ENCODE measurements at regions of chr3 and their contacts with region 1.

Region 1: DNA sequence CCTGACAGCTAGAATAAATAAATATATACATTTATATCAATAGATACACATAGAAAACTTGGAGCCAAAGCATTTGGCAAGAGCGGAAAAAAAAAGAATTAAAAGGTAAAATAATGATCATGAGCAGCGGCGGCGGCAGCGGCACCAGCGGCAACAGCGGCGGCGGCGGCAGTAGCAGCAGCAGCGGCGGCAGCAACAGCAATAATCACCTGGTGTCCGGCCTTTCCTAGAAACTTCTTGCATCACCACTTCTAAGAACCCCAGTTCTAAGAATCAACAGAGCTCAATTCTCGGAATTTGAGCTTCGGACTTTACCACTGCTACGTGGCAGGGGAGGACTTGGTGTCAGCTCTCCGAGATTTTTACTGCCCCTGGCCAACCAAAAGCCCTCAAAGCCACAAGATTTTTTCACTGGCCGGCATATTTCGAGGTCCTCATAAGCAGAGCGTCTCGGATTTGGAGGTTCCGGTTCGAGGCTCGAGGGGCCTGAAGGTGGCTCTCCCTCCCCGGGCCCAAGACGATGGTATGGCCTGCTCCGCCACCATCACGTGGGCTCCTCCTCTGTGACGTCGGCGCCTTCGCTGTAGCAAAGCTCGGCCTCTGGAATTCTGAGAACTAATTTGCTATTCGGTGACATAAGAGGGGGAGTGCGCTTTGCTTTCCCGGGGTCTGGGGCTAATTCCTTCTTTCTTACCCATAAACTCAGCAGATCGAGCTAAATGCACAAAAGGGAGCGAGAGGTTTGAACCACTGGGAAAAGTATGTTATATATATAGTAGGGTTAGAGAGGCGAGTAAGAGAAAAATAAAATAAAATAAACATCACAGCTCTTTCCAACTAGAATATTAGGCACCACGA is at the start of gene BCL6:
- DNase-seq: peak; percentile 93 to 94
- ATAC-seq: peak; percentile 48 to 51
- H3K4me3 ChIP-seq: peak within 1 kb of the TSS; percentile 70 to 94 (median 88)
- H3K27ac ChIP-seq: peak within 1 kb of the TSS; percentile 95 to 100 (median 98)
- H3K4me1 ChIP-seq: peaks cover 22% of the 10 kb centered on the region in 2 donors
- H3K27me3 ChIP-seq: no peaks in the 10 kb centered on the region
- CTCF ChIP-seq: peak in 3 of 5 experiments; percentile 16 to 35 (median 23)
- POLR2A ChIP-seq: peak; percentile 95 to 99
- total RNA-seq, gene BCL6: 223 to 363 (median 292) TPM

Region 2: DNA sequence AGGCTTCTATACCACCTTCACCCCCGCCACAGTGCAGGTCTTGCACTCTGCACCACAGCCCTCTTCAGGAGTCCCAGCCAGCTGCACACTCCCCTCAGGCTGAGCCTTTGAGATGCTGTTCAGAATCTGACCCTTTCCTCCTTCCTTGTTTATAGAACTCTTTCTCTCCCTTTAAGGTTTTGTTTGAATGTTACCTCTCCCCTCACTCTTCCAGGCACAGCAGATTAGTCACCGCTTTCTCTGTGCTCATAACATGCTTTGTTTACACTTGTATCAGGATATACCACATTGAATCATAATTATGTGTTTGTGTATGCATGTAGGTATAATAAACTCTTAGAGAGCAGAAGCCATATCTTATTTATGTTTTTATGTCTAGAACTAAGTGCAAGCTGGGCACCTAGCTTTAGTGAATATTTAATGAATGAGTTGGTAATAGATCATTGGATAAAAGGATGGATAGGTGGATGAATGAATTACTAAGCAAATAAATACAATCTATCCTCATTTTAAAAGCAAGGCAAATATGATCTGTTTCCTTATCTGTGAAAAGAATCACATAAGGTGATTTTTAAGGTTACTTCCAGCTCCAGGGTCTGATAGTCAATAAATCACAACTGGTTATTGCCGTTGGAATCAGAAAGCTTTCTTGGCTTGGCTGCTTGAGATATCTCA is 168.3 kb after region 1 on chr3:
- in situ Hi-C with region 1: loop called in 1 of 4 experiments (anchors 5 kb)
- intact Hi-C with region 1: loop called (anchors 2 kb)
- DNase-seq: no peak
- ATAC-seq: no peak
- H3K4me3 ChIP-seq: no peak overlapping the region
- H3K27ac ChIP-seq: peak overlapping the region; percentile 78 to 94 (median 80)
- H3K4me1 ChIP-seq: peaks cover 59 to 62% of the 10 kb centered on the region in 2 donors
- H3K27me3 ChIP-seq: no peaks in the 10 kb centered on the region
- CTCF ChIP-seq: no peak
- POLR2A ChIP-seq: no peak

Region 3: GRCh38 chr3:188006726-188007393 is 261.4 kb after region 1 on chr3:
- in situ Hi-C with region 1: loop called in 1 of 4 experiments (anchors 10 kb)
- intact Hi-C with region 1: loop called (anchors 2 kb)
- DNase-seq: peak; percentile 87 to 97
- ATAC-seq: peak; percentile 86 to 90
- H3K4me3 ChIP-seq: peak overlapping the region; percentile 12 to 42 (median 26)
- H3K27ac ChIP-seq: peak overlapping the region; percentile 88 to 97 (median 90)
- H3K4me1 ChIP-seq: peaks cover 9 to 18% of the 10 kb centered on the region in 2 donors
- H3K27me3 ChIP-seq: no peaks in the 10 kb centered on the region
- CTCF ChIP-seq: peak in 2 of 5 experiments; percentile 4 to 23
- POLR2A ChIP-seq: peak; percentile 36 to 72

Region 4: GRCh38 chr3:188205992-188206416 is 460.6 kb after region 1 on chr3:
- in situ Hi-C with region 1: loop called in 1 of 4 experiments (anchors 25 kb)
- intact Hi-C with region 1: no loop called
- DNase-seq: no peak
- ATAC-seq: peak in 1 of 2 donors; percentile 50
- H3K4me3 ChIP-seq: no peak overlapping the region
- H3K27ac ChIP-seq: peak overlapping the region; percentile 23 to 72 (median 52)
- H3K4me1 ChIP-seq: peaks cover 25 to 31% of the 10 kb centered on the region in 2 donors
- H3K27me3 ChIP-seq: no peaks in the 10 kb centered on the region
- CTCF ChIP-seq: peak in 3 of 5 experiments; percentile 27 to 37 (median 37)
- POLR2A ChIP-seq: no peak

Region 5: DNA sequence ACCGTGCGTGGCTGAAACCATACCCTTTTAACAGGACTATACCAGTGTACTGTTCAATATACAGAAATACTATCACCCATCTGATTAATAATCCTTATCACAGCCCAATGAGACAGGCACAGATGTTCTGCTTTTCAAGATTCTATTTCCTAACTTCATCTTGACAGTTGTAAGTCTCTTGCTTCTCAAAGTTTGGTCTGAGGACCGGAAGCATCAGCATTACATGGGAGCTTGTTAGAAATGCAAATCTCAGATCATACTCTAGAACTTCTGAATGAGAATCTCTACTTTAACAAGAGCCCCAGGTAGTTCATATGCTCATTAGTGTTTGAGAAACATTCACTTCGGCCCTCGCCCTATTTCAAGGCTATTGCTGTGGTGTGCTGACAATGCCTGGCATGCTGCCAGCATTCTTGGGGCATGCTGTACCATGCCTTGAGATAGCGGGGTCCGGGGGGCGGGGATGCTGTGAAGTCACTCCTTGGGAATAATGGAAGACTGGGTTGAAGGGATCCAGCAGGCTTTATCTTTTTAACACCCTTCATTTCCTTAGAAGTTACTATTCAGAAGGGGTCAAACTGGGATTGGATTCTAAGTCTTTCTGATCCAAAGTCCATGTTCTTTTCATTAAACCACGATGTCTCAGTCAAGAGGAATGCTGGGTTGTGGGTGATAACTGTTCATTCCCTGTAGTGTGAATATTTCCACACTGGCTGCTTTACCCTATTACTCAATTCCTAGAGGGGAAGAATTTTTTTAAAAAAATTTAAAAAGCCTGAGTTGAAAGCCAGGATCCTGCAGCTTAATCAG is 603.2 kb after region 1 on chr3:
- in situ Hi-C with region 1: loop called in 1 of 4 experiments (anchors 10 kb)
- intact Hi-C with region 1: loop called (anchors 5 kb)
- DNase-seq: peak in 1 of 2 donors; percentile 61
- ATAC-seq: peak; percentile 31 to 36
- H3K4me3 ChIP-seq: no peak overlapping the region
- H3K27ac ChIP-seq: peak overlapping the region; percentile 80 to 91 (median 86)
- H3K4me1 ChIP-seq: peaks cover 42 to 80% of the 10 kb centered on the region in 2 donors
- H3K27me3 ChIP-seq: no peaks in the 10 kb centered on the region
- CTCF ChIP-seq: no peak
- POLR2A ChIP-seq: no peak

Region 6: DNA sequence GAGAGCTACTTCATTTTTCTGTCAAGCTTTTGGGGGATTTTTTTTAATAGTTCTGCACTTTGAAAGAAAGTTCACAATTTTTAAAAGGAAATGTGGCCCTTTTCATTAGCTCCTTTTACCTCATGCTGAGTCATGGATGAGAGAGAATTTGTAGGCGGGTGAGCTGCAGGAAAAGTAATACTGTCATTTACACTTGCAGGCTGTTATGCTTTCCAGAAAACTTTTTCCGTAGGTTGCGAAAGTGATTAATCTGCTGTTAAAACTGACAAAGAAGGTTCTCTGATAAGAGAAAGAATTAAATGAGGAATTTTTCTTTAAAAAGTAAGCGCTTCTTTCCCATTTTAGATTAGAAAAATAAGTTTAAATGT is 838.7 kb after region 1 on chr3:
- in situ Hi-C with region 1: loop called in 2 of 4 experiments (anchors 25 kb)
- intact Hi-C with region 1: loop called (anchors 10 kb)
- DNase-seq: peak in 1 of 2 donors; percentile 17
- ATAC-seq: peak; percentile 76 to 79
- H3K4me3 ChIP-seq: peak overlapping the region; percentile 17 to 44 (median 20)
- H3K27ac ChIP-seq: peak overlapping the region; percentile 67 to 77 (median 74)
- H3K4me1 ChIP-seq: peaks cover 39 to 42% of the 10 kb centered on the region in 2 donors
- H3K27me3 ChIP-seq: no peaks in the 10 kb centered on the region
- CTCF ChIP-seq: no peak
- POLR2A ChIP-seq: no peak

Region 7: DNA sequence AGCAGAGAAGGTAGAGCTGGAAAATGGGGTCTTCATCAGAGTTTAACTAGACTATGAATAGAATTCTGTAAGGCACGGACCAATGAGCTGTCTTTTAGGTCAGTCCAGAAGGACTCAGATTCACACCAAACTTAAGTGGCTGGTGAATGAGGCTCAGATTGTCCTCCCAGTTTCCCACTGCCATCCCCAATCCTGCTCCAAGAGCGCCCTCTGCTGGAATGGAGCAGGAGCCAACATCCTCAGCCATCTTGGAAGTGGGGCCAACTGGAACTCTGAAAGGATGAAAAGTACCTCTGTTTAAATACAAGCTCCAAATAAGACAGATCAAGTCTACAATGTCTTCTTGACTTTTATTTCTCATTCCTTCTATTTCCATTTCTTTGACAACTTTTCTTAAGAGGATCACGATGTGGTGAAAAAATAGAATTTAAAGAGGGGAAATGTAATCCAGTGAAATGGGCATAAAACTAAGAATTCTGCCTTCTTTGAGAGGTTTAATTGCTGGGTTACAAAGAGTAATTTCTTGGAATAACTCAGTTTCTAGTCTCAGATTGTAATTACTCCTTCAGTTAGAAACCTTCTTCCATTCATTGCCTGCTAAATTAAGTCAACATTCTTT is 1209.3 kb after region 1 on chr3:
- in situ Hi-C with region 1: loop called in 3 of 4 experiments (anchors 5 kb)
- intact Hi-C with region 1: no loop called
- DNase-seq: peak; percentile 73 to 85
- ATAC-seq: peak; percentile 77 to 87
- H3K4me3 ChIP-seq: no peak overlapping the region
- H3K27ac ChIP-seq: peak overlapping the region; percentile 50 to 76 (median 66)
- H3K4me1 ChIP-seq: peaks cover 41 to 42% of the 10 kb centered on the region in 2 donors
- H3K27me3 ChIP-seq: no peaks in the 10 kb centered on the region
- CTCF ChIP-seq: peak; percentile 93 to 96 (median 94)
- POLR2A ChIP-seq: no peak